ENCODE measurements at regions of chr3 and their contacts with region 1.

Region 1: GRCh38 chr3:66483406-66483906 is 17.4 kb downstream of the LRIG1 start:
- DNase-seq: no peak
- ATAC-seq: peak; percentile 7; the same call in 1 of the 3 replicates
- H3K4me3 ChIP-seq: no peak overlapping the region; a peak in 1 of 6 replicates
- H3K27ac ChIP-seq: peak overlapping the region; percentile 99
- H3K4me1 ChIP-seq: peaks cover 90% of the 10 kb centered on the region
- H3K27me3 ChIP-seq: no peaks in the 10 kb centered on the region
- CTCF ChIP-seq: no peak
- EP300 ChIP-seq: no peak
- POLR2A ChIP-seq: no peak
- RAD21 ChIP-seq: no peak

Region 2: GRCh38 chr3:66407611-66408218 is 75.7 kb before region 1 on chr3:
- CTCF ChIA-PET with region 1: no interaction called
- POLR2A ChIA-PET with region 1: interaction called, 3 read pairs
- in situ Hi-C with region 1: no loop called
- intact Hi-C with region 1: loop called (anchors 5 kb)
- DNase-seq: peak; percentile 48
- ATAC-seq: peak; percentile 92
- H3K4me3 ChIP-seq: no peak overlapping the region
- H3K27ac ChIP-seq: no peak overlapping the region
- H3K4me1 ChIP-seq: peaks cover 9% of the 10 kb centered on the region
- H3K27me3 ChIP-seq: no peaks in the 10 kb centered on the region
- CTCF ChIP-seq: peak; percentile 96
- EP300 ChIP-seq: no peak
- POLR2A ChIP-seq: no peak
- RAD21 ChIP-seq: peak; percentile 98

Region 3: GRCh38 chr3:66463054-66463631 is 20.3 kb before region 1 on chr3:
- CTCF ChIA-PET with region 1: no interaction called
- POLR2A ChIA-PET with region 1: interaction called, 115 read pairs
- in situ Hi-C with region 1: no loop called
- intact Hi-C with region 1: loop called (anchors 1 kb)
- DNase-seq: peak; percentile 82
- ATAC-seq: peak; percentile 91
- H3K4me3 ChIP-seq: peak overlapping the region in 1 of 3 experiments; percentile 20; a peak in 3 of 6 replicates
- H3K27ac ChIP-seq: peak overlapping the region; percentile 73
- H3K4me1 ChIP-seq: peaks cover 78% of the 10 kb centered on the region
- H3K27me3 ChIP-seq: no peaks in the 10 kb centered on the region
- CTCF ChIP-seq: no peak
- EP300 ChIP-seq: peak in 1 of 2 experiments; percentile 90; a peak in 2 of 4 replicates
- POLR2A ChIP-seq: peak in 1 of 2 experiments; percentile 36; a peak in 1 of 4 replicates
- RAD21 ChIP-seq: no peak

Region 4: GRCh38 chr3:66469220-66469904 is 14.1 kb before region 1 on chr3:
- CTCF ChIA-PET with region 1: no interaction called
- POLR2A ChIA-PET with region 1: interaction called, 115 read pairs
- in situ Hi-C with region 1: no loop called
- intact Hi-C with region 1: no loop called
- DNase-seq: no peak
- ATAC-seq: no peak
- H3K4me3 ChIP-seq: no peak overlapping the region
- H3K27ac ChIP-seq: no peak overlapping the region
- H3K4me1 ChIP-seq: peaks cover 85% of the 10 kb centered on the region
- H3K27me3 ChIP-seq: no peaks in the 10 kb centered on the region
- CTCF ChIP-seq: no peak
- EP300 ChIP-seq: no peak
- POLR2A ChIP-seq: no peak
- RAD21 ChIP-seq: no peak

Region 5: DNA sequence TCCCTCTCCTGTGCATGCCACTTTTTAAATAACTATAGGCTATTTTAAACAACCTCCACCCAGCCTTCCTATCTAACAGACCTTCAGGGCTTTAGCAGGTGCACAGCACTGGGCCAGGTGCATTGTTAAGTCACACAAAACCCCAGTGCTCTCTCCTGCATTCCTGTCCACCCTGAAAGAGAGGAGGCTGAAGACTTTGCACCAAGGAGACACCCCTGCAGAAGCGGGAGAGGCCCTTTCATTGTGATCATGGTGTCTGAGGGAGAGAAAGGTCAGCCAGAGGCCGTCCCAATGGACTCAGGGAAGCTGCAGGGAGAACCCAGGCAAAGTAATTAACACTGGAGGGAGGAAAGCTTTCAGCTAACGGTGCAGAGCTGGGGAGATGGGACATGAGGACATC is 12.2 kb after region 1 on chr3:
- CTCF ChIA-PET with region 1: no interaction called
- POLR2A ChIA-PET with region 1: interaction called, 26 read pairs
- in situ Hi-C with region 1: no loop called
- intact Hi-C with region 1: loop called (anchors 1 kb)
- DNase-seq: no peak
- ATAC-seq: peak; percentile 52
- H3K4me3 ChIP-seq: no peak overlapping the region
- H3K27ac ChIP-seq: peak overlapping the region; percentile 20
- H3K4me1 ChIP-seq: peaks cover 85% of the 10 kb centered on the region
- H3K27me3 ChIP-seq: no peaks in the 10 kb centered on the region
- CTCF ChIP-seq: no peak
- EP300 ChIP-seq: peak in 1 of 2 experiments; percentile 37; a peak in 1 of 4 replicates
- POLR2A ChIP-seq: no peak
- RAD21 ChIP-seq: no peak